GM18951 (cell line): ENCODE measurements at regions of chr6 and their contacts with region 1.

Region 1: DNA sequence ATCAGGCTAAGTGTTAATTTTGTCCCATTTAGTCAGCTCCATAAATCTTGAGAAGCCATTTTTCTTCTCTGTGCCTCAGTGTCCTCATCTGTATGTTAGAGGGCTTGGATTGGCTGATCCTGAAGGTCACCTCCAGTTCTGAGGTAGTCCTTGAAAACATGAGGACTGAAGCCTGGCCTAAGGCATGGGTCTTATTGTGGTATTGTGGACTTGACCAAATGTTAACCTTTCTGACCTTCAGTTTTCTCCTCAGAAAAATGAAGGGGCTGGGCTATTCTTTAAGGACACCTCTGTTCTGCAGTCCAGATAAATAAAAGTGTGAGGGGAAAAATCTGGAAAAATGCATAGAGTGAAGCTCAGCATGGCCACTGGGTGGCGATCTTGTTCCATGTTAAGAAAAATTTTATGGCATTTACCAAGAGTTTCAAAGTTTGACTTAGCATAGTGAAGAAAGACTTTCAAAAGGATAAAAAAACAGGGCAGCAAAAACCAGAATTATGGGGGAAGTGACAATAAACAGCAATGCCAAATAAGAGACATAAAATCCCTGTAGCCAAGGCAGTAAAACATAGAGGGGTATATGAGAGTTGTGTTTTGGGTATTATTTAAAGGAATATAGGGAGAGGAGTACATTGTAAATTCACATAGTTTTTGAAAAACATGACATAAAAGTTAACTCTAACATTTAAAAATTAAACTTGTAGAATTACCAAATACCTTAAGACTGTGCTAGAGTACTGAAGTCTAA is 13.2 kb upstream of the TFB1M start:
- POLR2A ChIP-seq: no peak

Region 2: DNA sequence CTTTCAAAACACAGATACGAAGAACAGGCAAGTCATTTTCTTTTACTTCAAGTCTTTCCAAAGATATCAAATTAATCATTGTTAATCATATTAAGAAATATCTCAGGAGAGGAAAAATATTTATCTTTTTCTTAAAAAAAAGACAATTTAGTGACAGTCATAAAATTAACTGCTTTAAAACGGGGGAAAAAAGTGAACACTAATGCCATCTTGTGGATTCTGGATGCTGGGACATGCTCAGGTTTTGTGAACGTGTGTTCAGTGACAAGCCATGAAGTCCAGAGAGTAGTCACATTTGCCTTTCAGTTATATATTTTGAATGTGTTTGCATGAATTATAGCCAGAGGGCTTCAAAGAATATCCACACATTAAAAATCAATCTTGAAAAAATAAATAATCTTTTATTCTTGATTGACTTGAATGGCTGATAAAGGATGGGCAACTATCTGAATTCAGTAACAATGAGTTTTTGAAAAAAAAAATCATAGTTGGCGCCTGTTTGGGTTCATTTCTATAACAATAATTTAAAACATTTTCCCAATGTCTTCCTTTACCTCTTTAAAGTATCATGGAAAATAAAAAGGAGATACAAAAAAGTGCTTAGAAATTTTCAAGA is 202.8 kb after region 1 on chr6:
- in situ Hi-C with region 1: loop called (anchors 5 kb)
- POLR2A ChIP-seq: no peak

Region 3: DNA sequence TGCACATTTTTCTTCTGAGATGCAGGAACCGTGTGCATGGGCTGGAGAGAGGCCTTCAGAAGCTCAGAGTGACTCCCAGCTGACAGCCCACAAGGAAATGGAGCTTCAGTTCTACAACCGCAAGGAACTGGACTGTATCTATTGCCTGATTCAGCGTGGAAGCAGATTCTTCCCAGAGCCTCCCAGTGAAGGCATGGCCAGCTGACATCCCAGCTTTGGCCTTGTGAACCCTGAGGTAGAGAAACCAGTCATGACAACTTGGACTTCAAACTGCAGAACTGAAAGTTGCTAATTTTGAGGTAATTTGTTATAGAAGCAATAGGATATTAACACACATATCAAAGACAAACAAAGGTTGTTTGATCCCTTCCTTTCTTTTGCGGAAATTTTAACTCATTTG is 222.4 kb after region 1 on chr6:
- in situ Hi-C with region 1: no loop called
- POLR2A ChIP-seq: no peak

Region 4: DNA sequence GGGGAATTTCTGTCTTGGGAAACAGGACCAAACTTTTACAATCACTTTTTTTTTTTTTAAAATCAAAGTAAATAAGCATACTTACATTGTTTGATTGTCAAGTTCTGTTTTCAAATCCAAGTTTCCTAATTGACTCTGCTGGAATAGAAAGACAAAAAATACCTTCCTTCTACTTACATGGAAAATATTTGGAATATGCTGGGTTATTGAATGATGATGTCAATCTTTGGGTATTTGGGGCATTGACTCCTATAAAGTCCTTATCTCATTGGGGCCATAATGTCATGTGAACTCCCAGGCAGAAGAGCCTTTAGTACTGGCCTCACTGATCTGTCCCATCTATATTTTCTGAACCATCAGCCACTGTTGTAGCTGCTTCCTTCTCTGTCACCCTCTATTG is 250.8 kb after region 1 on chr6:
- in situ Hi-C with region 1: no loop called
- POLR2A ChIP-seq: no peak

Region 5: GRCh38 chr6:155882527-155883333 is 555.2 kb after region 1 on chr6:
- in situ Hi-C with region 1: loop called (anchors 25 kb)
- POLR2A ChIP-seq: no peak

Region 6: GRCh38 chr6:156068881-156069280 is 741.4 kb after region 1 on chr6:
- in situ Hi-C with region 1: loop called (anchors 25 kb)
- POLR2A ChIP-seq: no peak

Region 7: DNA sequence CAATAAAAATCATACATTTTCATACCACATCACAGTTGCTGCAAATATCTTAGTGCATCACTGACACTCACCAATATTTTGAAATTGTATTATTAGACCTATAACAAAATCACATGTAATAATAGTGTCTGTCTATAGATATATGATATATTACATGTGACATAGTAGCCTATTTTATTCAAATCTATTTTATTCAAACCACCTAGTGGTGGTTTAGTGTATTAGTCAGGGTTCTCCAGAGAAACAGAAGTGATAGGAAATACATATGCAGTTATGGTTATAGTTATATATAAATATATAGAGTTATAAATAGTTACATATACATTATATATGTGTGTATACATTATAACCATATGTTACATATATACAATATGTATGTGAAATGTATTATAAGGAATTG is 1083.1 kb after region 1 on chr6:
- in situ Hi-C with region 1: no loop called
- POLR2A ChIP-seq: no peak

Region 8: GRCh38 chr6:156564127-156564806 is 1236.8 kb after region 1 on chr6:
- in situ Hi-C with region 1: loop called (anchors 25 kb)
- POLR2A ChIP-seq: no peak